Mammary epithelial cell (primary cell): ENCODE measurements at regions of chr12 and their contacts with region 1.

Region 1: DNA sequence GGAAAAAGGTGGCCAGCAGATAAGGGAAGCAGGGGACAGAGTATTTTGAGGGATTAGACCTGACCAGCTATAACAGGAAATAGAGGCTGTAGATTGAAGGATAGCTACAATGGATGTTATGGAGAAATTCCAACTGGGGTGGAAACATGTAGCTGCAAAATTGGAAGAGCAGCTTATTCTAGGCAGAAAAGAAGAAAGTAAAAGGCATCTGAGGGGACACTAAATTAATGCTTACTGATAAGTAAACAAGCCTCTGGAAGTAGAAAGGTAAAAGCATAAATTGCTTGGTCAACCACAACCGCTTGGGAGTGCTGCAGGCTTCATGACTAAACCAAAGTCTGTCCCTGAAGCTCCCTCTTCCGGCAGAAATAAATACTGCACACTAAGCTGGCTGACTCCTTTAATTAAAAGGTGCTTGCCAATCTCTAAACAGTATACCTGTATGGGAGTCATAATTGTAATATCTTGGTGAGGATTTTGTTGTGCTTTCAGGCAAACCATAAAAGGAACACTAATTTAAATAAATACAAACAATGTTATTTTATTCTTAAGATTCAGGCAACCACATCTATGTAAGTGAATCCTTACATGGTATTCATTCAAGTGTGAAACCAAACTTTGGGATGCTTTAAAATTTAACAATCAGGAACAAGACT is 7.7 kb downstream of the UBC start:
- DNase-seq: peak; percentile 89
- H3K4me3 ChIP-seq: no peak overlapping the region
- H3K27ac ChIP-seq: no peak overlapping the region
- H3K4me1 ChIP-seq: peaks cover 25% of the 10 kb centered on the region
- H3K27me3 ChIP-seq: no peaks in the 10 kb centered on the region
- CTCF ChIP-seq: peak; percentile 97 to 100

Region 2: GRCh38 chr12:123388177-123388947 is 1518.4 kb before region 1 on chr12:
- CTCF ChIA-PET with region 1: interaction called, 27 read pairs
- dilution Hi-C with region 1: no loop called
- in situ Hi-C with region 1: no loop called
- intact Hi-C with region 1: no loop called
- DNase-seq: peak; percentile 62
- H3K4me3 ChIP-seq: peak overlapping the region; percentile 46 to 65 (median 62)
- H3K27ac ChIP-seq: no peak overlapping the region
- H3K4me1 ChIP-seq: peaks cover 30% of the 10 kb centered on the region
- H3K27me3 ChIP-seq: no peaks in the 10 kb centered on the region
- CTCF ChIP-seq: no peak

Region 3: GRCh38 chr12:124036674-124037109 is 870.0 kb before region 1 on chr12:
- CTCF ChIA-PET with region 1: no interaction called
- dilution Hi-C with region 1: no loop called
- in situ Hi-C with region 1: no loop called
- intact Hi-C with region 1: loop called (anchors 10 kb)
- DNase-seq: no peak
- H3K4me3 ChIP-seq: no peak overlapping the region
- H3K27ac ChIP-seq: no peak overlapping the region
- H3K4me1 ChIP-seq: no peaks in the 10 kb centered on the region
- H3K27me3 ChIP-seq: no peaks in the 10 kb centered on the region
- CTCF ChIP-seq: peak; percentile 82 to 95

Region 4: DNA sequence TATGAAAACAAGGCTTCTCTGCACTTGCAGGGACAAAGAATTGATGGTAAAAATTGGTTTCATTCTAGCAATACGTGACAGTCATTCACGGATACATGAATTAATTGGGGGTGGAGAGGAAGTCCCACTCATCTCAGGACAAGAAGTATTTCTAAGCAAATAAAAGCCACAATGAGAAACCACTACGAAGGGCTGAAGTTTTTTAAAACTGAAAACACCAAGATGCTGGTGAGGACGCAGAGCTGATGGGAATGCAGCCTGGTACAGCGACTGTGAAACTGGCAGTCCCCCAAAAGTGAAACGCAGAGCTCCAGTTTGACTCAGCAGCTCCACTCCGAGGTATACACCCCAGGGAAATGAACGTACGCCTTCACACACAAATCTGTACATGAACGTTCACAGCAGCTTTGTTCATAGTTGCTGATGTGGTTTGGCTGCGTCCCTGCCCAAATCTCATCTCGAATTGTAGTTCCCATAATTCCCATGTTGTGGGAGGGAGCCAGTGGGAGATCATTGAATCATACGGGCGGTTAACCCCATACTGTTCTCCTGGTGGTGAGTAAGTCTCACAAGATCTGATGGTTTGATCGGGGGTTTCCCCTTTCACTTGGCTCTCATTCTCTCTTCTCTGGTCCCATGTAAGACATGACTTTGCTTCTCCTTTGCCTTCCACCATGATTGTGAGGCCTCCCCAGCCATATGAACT is 132.1 kb before region 1 on chr12:
- CTCF ChIA-PET with region 1: no interaction called
- dilution Hi-C with region 1: no loop called
- in situ Hi-C with region 1: no loop called
- intact Hi-C with region 1: loop called (anchors 2 kb)
- DNase-seq: peak; percentile 87
- H3K4me3 ChIP-seq: no peak overlapping the region
- H3K27ac ChIP-seq: no peak overlapping the region
- H3K4me1 ChIP-seq: peaks cover 19% of the 10 kb centered on the region
- H3K27me3 ChIP-seq: no peaks in the 10 kb centered on the region
- CTCF ChIP-seq: peak in 1 of 2 donors; percentile 12

Region 5: DNA sequence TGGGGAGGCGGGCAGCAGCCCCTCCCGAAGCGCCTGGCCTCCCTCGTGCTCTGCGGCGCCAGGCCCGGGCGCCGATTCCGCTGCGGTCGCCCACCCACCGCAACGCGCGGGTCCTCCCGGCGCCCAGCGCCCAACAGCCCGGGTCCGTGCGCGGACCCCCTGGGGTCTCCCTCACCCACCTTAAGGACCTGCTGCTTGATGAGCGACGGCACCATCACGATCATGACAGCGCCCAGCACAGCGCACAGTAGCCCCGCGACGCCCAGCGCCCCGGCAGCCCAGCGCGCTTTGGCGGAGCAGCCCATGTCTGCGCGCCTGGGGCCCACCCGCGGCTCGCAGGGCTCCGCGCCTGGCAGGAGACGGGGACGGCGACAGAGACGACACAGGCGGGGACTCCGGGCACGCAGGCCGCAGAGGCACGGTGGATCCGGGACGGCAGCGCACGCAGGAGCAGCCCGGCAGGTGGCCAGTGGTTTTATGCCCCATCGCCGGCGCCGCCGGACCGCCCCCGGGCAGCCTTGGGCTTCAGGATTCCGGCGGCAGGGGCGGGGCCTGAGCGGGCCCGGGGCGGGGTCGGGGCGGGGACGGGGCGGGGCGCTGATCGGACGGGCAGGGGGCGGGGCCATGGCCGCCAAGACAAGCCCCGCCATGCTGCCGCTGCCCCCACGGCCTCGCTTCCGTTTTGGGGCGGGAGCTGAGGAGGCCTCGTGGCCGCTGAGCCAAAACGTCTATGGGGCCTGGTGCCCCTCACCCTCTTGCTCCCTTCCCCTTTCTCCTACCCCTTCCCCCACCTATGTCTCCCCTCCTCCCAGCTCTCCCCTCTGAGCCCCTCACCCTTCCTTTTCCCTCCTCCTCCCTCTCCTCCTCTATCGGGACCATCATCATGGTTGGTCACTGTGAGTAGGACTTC is 43.1 kb before region 1 on chr12 and contains the start of gene SCARB1:
- CTCF ChIA-PET with region 1: no interaction called
- dilution Hi-C with region 1: no loop called
- in situ Hi-C with region 1: no loop called
- intact Hi-C with region 1: no loop called
- DNase-seq: peak; percentile 72
- H3K4me3 ChIP-seq: peak within 1 kb of the TSS; percentile 74 to 91 (median 78)
- H3K27ac ChIP-seq: peak within 1 kb of the TSS; percentile 36
- H3K4me1 ChIP-seq: peaks cover 20% of the 10 kb centered on the region
- H3K27me3 ChIP-seq: no peaks in the 10 kb centered on the region
- CTCF ChIP-seq: no peak
- total RNA-seq, gene SCARB1: 44.8 to 60.9 TPM

Region 6: DNA sequence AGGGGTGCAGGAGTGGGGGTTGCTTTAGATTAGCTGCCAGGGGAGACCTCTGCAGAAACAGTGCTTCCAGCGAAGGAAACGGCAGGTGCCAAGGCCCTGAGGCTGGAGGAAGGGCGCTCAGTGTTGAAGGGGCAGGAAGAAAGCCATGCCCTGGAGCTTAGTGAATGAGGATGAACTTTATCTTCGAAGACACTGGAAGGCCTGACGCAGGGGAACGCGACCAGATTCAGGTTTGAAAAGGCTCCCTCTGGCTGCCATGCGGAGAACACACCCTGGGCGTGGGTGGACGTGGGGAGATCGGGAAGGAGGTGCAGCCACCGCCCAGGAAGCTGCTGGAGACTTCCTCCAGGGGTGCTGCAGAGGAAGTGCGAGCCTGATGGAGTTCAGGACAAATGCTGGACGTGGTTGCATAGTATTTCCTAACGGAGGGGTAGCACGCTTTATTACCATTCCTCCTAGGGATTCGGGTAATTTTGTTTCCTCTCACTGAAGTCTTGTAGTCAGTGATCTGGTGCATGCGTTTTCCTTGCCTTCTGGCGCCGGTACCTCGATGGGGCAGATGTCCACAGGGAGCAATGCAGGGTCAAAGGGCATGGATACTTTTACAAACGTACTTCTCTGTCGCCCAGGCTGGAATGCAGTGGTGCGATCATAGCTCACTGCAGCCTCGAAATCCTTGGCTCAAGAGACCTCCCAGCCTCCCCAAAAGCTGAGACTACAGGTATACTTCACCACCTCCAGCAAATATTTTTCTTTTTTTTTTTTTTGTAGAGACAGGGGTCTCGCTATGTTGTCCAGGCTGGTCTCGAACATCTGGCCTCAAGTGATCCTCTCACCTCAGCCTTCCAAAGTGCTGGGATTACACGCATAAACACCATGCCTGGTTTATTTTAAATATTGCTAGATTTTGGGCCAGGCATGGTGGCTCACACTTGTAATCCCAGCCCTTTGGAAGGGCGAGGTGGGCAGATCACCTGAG is 34.1 kb after region 1 on chr12:
- CTCF ChIA-PET with region 1: interaction called, 21 read pairs
- dilution Hi-C with region 1: no loop called
- in situ Hi-C with region 1: no loop called
- intact Hi-C with region 1: loop called (anchors 1 kb)
- DNase-seq: peak; percentile 88
- H3K4me3 ChIP-seq: peak overlapping the region; percentile 4 to 58 (median 30)
- H3K27ac ChIP-seq: peak overlapping the region; percentile 37
- H3K4me1 ChIP-seq: peaks cover 33% of the 10 kb centered on the region
- H3K27me3 ChIP-seq: no peaks in the 10 kb centered on the region
- CTCF ChIP-seq: peak; percentile 95 to 97

Region 7: GRCh38 chr12:125065021-125065795 is 158.5 kb after region 1 on chr12 and contains the start of gene AACS:
- CTCF ChIA-PET with region 1: no interaction called
- dilution Hi-C with region 1: no loop called
- in situ Hi-C with region 1: no loop called
- intact Hi-C with region 1: loop called (anchors 2 kb)
- DNase-seq: peak; percentile 75
- H3K4me3 ChIP-seq: peak within 1 kb of the TSS; percentile 69 to 84 (median 74)
- H3K27ac ChIP-seq: peak within 1 kb of the TSS; percentile 44
- H3K4me1 ChIP-seq: peaks cover 15% of the 10 kb centered on the region
- H3K27me3 ChIP-seq: no peaks in the 10 kb centered on the region
- CTCF ChIP-seq: peak in 1 of 2 donors; percentile 3
- total RNA-seq, gene AACS: 35.1 to 36.0 TPM

Region 8: GRCh38 chr12:125183187-125184067 is 276.7 kb after region 1 on chr12:
- CTCF ChIA-PET with region 1: no interaction called
- dilution Hi-C with region 1: no loop called
- in situ Hi-C with region 1: no loop called
- intact Hi-C with region 1: loop called (anchors 10 kb)
- DNase-seq: peak; percentile 58
- H3K4me3 ChIP-seq: no peak overlapping the region
- H3K27ac ChIP-seq: no peak overlapping the region
- H3K4me1 ChIP-seq: peaks cover 12% of the 10 kb centered on the region
- H3K27me3 ChIP-seq: peaks cover 13% of the 10 kb centered on the region
- CTCF ChIP-seq: peak; percentile 97 to 99